ENCODE measurements at regions of chr1 and their contacts with region 1.

Region 1: GRCh38 chr1:167635941-167636340 is 5.9 kb downstream of the RCSD1 start:
- DNase-seq: no peak
- H3K4me3 ChIP-seq: 0 out of 8 replicates have a peak overlapping the region, but pooled peaks of 1 of the 4 experiments have one; percentile 33
- H3K27ac ChIP-seq: no peak overlapping the region
- H3K4me1 ChIP-seq: peaks cover 0 to 5% (median 5%) of the 10 kb centered on the region in 4 experiments; a peak in 6 of 7 replicates
- H3K27me3 ChIP-seq: peaks cover 5 to 32% (median 25%) of the 10 kb centered on the region in 4 experiments
- CTCF ChIP-seq: no peak
- EP300 ChIP-seq: no peak
- POLR2A ChIP-seq: no peak
- RAD21 ChIP-seq: no peak

Region 2: GRCh38 chr1:167599957-167600581 is 35.9 kb before region 1 on chr1:
- CTCF ChIA-PET with region 1: no interaction called
- POLR2A ChIA-PET with region 1: no interaction called
- DNase-seq: no peak
- H3K4me3 ChIP-seq: no peak overlapping the region
- H3K27ac ChIP-seq: no peak overlapping the region
- H3K4me1 ChIP-seq: peaks cover 0 to 5% (median 0%) of the 10 kb centered on the region in 4 experiments; a peak in 1 of 7 replicates
- H3K27me3 ChIP-seq: no peaks in the 10 kb centered on the region
- CTCF ChIP-seq: peak in 1 of 3 experiments; percentile 31; a peak in 1 of 4 replicates
- EP300 ChIP-seq: no peak
- POLR2A ChIP-seq: no peak
- RAD21 ChIP-seq: peak; percentile 44 to 51; a peak in 3 of 4 replicates

Region 3: GRCh38 chr1:167650269-167651160 is 14.6 kb after region 1 on chr1:
- CTCF ChIA-PET with region 1: interaction called, 13 read pairs
- POLR2A ChIA-PET with region 1: no interaction called
- DNase-seq: no peak
- H3K4me3 ChIP-seq: no peak overlapping the region
- H3K27ac ChIP-seq: no peak overlapping the region
- H3K4me1 ChIP-seq: 0 out of 7 replicates have a peak, but pooled peaks cover 0 to 4% (median 0%) of the 10 kb centered on the region in 4 experiments
- H3K27me3 ChIP-seq: no peaks in the 10 kb centered on the region
- CTCF ChIP-seq: no peak
- EP300 ChIP-seq: no peak
- POLR2A ChIP-seq: no peak
- RAD21 ChIP-seq: no peak

Measured in H1 (cell line).